Prostate gland (tissue), 2 donors: ENCODE measurements at regions of chr3 and their contacts with region 1.

Region 1: DNA sequence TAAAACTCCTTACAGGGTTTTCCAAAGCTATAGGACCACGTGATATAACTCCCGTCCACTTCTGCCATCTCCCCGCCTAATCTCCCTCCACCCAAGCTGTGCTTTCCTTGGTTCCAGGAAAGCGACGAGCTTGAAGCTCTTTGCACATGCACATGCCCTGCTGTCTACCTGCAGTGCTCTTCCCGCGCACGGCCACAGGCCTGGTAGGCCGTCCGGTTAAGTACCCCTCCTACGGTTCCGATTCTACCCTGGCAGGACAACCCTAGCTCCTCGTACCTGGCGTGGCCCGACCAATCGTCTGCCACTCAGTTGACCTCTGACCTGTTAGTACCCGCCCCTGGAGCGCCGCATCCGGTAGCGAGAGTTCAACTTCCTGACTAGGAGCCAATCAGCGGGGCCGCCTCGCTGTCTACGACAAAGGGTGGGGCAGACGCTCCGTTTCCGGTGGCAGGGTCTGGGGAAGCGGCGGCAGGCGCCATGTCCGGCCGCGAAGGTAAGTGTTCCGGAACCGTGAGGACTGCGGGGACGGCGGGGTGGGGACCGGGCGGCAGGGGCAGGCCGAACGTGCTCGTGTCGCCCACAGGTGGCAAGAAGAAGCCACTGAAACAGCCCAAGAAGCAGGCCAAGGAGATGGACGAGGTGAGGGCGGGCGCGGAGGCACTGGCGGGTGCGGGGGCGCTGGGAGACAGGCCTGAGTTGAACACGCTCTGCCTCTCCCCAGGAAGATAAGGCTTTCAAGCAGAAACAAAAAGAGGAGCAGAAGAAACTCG is at the starts of genes CCDC51 and TMA7:
- DNase-seq: peak; percentile 99
- H3K4me3 ChIP-seq: peak within 1 kb of the TSS; percentile 87 to 96
- H3K27ac ChIP-seq: peak within 1 kb of the TSS; percentile 89 to 91
- H3K4me1 ChIP-seq: no peaks in the 10 kb centered on the region
- H3K27me3 ChIP-seq: no peaks in the 10 kb centered on the region
- CTCF ChIP-seq: peak in 2 of 4 experiments; percentile 16 to 23
- POLR2A ChIP-seq: peak; percentile 89
- total RNA-seq, gene CCDC51: 12.7 to 14.8 TPM
- total RNA-seq, gene TMA7: 310 to 446 TPM

Region 2: DNA sequence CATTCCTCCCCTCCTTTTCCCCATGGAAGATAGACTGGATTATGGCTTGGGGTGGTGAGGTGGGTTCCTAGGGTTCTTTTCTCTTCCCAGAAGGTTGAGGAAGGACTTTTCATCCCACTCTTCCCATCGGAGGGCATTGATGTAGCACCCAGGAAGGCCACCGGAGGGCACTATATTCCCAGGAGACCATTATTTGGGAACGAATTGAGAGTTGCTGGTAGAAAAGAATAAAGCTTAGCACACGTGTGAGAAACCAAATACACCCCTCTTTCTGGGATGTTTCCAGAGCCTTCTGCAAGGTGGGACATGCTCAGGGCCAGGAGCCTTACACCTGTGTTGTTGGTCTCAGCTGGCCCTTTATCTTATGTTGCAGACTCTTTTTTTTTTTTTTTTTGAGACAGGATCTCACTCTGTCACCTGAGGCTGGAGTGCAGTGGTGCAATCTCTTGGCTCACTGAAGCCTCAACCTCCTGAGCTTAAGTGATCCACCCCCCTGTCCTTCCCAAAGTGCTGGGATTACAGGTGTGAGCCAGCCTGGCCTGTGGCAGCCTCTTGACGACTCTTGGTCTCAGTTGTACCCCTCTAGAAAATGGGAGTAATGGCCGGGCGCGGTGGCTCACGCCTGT is 245.4 kb before region 1 on chr3:
- intact Hi-C with region 1: loop called (anchors 5 kb)
- DNase-seq: peak; percentile 66
- H3K4me3 ChIP-seq: no peak overlapping the region
- H3K27ac ChIP-seq: no peak overlapping the region
- H3K4me1 ChIP-seq: no peaks in the 10 kb centered on the region
- H3K27me3 ChIP-seq: no peaks in the 10 kb centered on the region
- CTCF ChIP-seq: peak in 3 of 4 experiments; percentile 73 to 82 (median 79)
- POLR2A ChIP-seq: no peak

Region 3: GRCh38 chr3:48273594-48274211 is 166.3 kb before region 1 on chr3:
- intact Hi-C with region 1: loop called (anchors 1 kb)
- DNase-seq: peak; percentile 55
- H3K4me3 ChIP-seq: no peak overlapping the region
- H3K27ac ChIP-seq: no peak overlapping the region
- H3K4me1 ChIP-seq: peaks cover 6% of the 10 kb centered on the region
- H3K27me3 ChIP-seq: no peaks in the 10 kb centered on the region
- CTCF ChIP-seq: peak; percentile 56 to 82 (median 74)
- POLR2A ChIP-seq: no peak

Region 4: DNA sequence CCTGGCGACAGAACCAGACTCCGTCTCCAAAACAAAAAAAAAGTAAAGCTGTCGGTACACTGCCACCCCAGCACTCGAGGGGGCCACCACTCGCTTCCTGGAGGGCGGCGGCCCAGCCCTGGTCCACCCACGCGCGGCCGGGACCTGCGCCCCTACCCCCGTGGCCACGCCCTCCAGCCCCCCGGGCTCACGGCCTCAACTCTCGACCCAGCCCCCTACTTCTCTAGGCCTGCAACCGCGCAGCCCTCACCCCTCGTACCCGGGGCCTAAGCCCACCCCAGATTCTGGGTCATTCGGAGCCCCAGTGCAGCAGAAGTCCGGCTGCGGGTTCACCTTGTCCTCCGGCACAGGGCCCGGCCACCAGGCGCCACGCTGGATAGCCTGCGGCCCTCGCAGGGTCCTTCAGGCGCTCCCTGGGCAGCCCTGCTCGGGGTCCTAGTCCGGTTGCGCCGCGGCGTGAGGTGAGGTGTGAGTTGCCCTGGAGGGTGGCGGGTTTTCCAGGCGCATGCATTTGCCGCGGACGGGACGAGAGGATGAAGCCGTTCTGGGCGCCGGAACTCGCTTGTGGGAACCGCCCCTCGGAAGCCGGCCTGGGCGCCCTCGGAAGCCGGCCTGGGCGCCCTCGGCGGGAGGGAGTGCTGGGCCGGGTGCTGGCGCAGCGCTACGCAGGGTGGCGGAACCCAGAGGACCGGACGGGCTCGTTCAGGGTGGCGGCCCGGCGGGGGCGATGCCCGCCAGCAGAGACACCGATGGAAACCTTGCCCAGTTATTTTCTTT is 138.8 kb before region 1 on chr3:
- intact Hi-C with region 1: loop called (anchors 10 kb)
- DNase-seq: peak; percentile 85
- H3K4me3 ChIP-seq: peak within 1 kb of the TSS; percentile 82 to 93
- H3K27ac ChIP-seq: peak within 1 kb of the TSS; percentile 94 to 98
- H3K4me1 ChIP-seq: no peaks in the 10 kb centered on the region
- H3K27me3 ChIP-seq: no peaks in the 10 kb centered on the region
- CTCF ChIP-seq: peak in 2 of 4 experiments; percentile 10 to 30
- POLR2A ChIP-seq: peak; percentile 77

Region 5: GRCh38 chr3:48400824-48401433 is 39.1 kb before region 1 on chr3:
- intact Hi-C with region 1: loop called (anchors 1 kb)
- DNase-seq: peak; percentile 73
- H3K4me3 ChIP-seq: no peak overlapping the region
- H3K27ac ChIP-seq: peak overlapping the region; percentile 75 to 77
- H3K4me1 ChIP-seq: no peaks in the 10 kb centered on the region
- H3K27me3 ChIP-seq: no peaks in the 10 kb centered on the region
- CTCF ChIP-seq: peak; percentile 67 to 94 (median 86)
- POLR2A ChIP-seq: no peak